WTC11 (cell line): ENCODE measurements at regions of chr11 and their contacts with region 1.

Region 1: GRCh38 chr11:82733444-82734119 is at the start of gene FAM181B:
- DNase-seq: peak; percentile 83
- ATAC-seq: peak; percentile 81
- H3K4me3 Mint-ChIP-seq: peak within 1 kb of the TSS; percentile 68
- H3K27ac Mint-ChIP-seq: no peak within 1 kb of the TSS
- H3K4me1 Mint-ChIP-seq: peaks cover 34% of the 10 kb centered on the region
- H3K27me3 Mint-ChIP-seq: peaks cover 59% of the 10 kb centered on the region
- CTCF ChIP-seq: no peak
- total RNA-seq, gene FAM181B: 0.80 to 1.1 TPM (median 1.0 TPM) in 3 replicates

Region 2: DNA sequence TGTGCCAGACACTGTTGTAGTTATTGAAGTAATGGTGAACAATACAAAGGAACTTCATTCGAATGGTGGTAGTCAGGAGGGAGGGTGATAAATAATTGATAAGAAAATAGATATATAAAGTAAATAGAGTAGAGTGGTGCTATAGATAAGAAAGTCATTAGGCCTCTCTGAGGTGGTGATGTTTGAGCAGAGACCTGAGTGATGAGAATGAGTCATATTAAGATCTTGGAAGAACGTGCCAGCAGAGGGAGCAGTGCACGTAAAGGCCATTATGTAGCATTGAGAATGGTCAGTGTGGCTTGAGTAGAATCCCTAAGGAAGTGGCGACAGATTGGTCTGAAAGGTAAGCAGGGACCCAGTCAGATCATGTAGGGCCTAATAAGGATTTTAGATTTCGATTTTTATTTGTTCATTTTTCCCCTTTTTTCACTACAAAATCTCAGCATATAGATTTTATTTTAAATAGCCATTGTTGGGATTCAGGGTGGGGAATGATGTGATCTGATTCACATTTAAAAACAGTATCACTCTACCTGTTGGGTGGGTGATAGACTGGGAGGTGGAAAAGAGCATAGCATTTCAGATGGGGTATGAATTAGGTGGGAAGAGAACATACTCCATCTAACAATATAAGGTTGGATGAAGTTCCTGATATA is 507.8 kb after region 1 on chr11:
- CTCF ChIA-PET with region 1: no interaction called
- POLR2A ChIA-PET with region 1: interaction called, 10 read pairs
- DNase-seq: peak; percentile 45
- ATAC-seq: peak; percentile 99
- H3K4me3 Mint-ChIP-seq: no peak overlapping the region
- H3K27ac Mint-ChIP-seq: no peak overlapping the region
- H3K4me1 Mint-ChIP-seq: no peaks in the 10 kb centered on the region
- H3K27me3 Mint-ChIP-seq: no peaks in the 10 kb centered on the region
- CTCF ChIP-seq: peak; percentile 54